ENCODE measurements at regions of chr10 and their contacts with region 1.

Region 1: DNA sequence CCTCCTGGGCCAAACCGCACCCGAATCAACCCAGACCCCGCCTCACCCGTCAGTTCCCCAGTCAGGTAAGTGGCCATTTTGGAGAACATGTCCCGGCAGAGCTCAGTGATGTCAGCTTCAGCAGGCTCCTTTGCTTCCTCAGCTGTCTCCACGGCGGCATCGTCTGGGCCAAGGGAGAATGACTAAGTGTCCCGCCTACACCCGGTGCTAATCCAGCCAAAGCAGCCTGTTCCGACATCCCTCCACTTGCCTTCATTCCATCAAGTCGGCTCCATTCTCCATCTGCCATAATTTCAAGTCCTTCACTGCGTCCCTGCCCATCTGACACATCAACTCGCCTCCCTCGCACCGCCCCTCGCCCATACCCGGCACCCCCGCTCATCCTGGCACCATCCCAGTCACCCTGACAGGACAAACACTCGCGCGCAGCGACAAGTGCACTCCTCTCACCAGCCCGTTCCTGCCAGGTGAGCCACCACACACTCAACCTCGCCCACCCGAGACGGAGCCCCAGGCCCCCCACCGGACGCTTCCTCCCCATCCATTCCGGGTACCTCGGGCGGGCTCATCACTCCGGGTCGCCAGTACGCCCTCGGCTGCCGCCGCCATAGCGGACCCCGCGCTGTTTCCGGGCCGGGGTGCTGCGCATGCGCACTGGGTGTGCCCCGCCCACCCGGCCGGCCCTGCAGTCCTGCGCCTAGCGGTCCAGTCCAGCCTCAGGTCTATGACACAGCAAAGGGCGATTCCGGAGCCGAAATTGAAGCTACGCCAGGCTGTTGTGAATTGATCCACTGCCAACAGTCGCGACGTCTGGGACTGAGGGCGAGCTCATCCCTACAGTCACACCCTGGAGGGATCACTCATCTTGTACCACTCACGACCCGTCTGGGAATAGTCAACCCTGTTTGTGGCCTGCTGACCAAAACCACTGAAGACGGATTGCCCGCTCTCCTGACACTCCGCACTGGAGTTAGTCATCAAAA is at the start of gene BLOC1S2:
- DNase-seq: peak; percentile 98
- H3K4me3 Mint-ChIP-seq: peak within 1 kb of the TSS; percentile 97
- H3K27ac Mint-ChIP-seq: peak within 1 kb of the TSS; percentile 98
- H3K4me1 Mint-ChIP-seq: peaks cover 18% of the 10 kb centered on the region
- H3K27me3 Mint-ChIP-seq: peaks cover under 1% of the 10 kb centered on the region
- total RNA-seq, gene BLOC1S2: 62.0 and 62.5 TPM in 2 replicates

Region 2: DNA sequence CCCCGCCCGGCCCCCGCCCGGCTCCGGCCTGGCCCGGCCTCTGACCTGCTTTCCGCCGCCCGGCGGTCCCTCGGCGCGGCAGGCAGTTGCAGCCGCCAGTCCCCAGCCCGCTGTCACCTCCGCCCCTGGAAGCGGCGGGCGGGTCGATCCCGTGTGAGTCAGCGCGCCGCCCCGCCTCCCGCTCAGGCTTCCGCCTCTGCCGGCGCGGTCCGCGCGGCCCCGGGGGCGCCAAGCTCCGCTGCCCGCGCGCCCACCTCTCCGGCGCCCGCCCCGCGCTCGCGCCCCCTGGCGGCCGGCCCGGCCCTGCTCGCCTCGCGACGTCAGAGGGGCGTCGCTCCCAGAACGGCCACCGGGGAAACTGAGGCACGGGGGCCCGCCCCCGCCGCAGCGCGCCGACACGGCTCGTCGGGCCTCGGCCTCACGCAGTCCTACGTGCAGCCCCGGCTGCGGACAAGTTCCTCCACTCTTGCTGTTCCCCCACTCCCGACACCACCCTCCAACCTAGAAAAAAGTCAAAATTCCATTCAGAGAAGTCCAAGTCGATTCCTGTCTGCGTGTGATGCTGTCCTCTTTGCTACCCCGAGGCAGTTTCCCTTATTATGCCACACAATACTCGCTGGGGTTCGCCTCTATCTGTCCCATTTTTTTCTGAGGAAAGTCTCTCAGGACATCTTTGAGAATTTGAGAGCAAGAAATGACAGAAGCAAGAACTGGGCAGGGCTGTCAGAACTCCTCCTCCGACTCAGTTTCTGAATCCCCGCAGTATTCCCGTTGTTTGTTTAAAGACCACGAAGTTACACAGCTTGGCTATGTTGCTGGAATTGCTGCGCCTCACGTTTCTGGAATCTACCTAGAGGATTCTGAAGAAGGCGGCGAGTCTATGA is 276.3 kb before region 1 on chr10 and contains the start of gene DNMBP:
- intact Hi-C with region 1: loop called (anchors 1 kb)
- DNase-seq: peak; percentile 95
- H3K4me3 Mint-ChIP-seq: peak within 1 kb of the TSS; percentile 89
- H3K27ac Mint-ChIP-seq: peak within 1 kb of the TSS; percentile 78
- H3K4me1 Mint-ChIP-seq: peaks cover 37% of the 10 kb centered on the region
- H3K27me3 Mint-ChIP-seq: peaks cover 31% of the 10 kb centered on the region
- total RNA-seq, gene DNMBP: 1.3 TPM in 2 replicates

Region 3: GRCh38 chr10:100267237-100268104 is 18.9 kb before region 1 on chr10 and contains the start of gene CWF19L1:
- intact Hi-C with region 1: loop called (anchors 2 kb)
- DNase-seq: peak; percentile 94
- H3K4me3 Mint-ChIP-seq: peak within 1 kb of the TSS; percentile 99
- H3K27ac Mint-ChIP-seq: peak within 1 kb of the TSS; percentile 98
- H3K4me1 Mint-ChIP-seq: peaks cover 15% of the 10 kb centered on the region
- H3K27me3 Mint-ChIP-seq: no peaks in the 10 kb centered on the region
- total RNA-seq, gene CWF19L1: 45.2 and 47.2 TPM in 2 replicates

Region 4: DNA sequence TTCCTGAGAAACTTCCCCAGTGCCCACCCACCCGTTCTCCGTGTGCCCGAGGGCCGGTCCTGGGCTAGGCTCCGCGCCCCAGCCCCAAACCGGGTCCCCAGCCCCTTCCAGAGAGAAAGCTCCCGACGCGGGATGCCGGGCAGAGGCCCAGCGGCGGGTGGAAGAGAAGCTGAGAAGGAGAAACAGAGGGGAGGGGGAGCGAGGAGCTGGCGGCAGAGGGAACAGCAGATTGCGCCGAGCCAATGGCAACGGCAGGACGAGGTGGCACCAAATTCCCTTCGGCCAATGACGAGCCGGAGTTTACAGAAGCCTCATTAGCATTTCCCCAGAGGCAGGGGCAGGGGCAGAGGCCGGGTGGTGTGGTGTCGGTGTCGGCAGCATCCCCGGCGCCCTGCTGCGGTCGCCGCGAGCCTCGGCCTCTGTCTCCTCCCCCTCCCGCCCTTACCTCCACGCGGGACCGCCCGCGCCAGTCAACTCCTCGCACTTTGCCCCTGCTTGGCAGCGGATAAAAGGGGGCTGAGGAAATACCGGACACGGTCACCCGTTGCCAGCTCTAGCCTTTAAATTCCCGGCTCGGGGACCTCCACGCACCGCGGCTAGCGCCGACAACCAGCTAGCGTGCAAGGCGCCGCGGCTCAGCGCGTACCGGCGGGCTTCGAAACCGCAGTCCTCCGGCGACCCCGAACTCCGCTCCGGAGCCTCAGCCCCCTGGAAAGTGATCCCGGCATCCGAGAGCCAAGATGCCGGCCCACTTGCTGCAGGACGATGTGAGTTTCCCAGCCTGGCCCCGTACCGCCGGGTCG is 60.6 kb after region 1 on chr10 and contains the start of gene SCD:
- intact Hi-C with region 1: loop called (anchors 1 kb)
- DNase-seq: peak; percentile 97
- H3K4me3 Mint-ChIP-seq: peak within 1 kb of the TSS; percentile 97
- H3K27ac Mint-ChIP-seq: peak within 1 kb of the TSS; percentile 94
- H3K4me1 Mint-ChIP-seq: peaks cover 58% of the 10 kb centered on the region
- H3K27me3 Mint-ChIP-seq: no peaks in the 10 kb centered on the region
- total RNA-seq, gene SCD: 252 and 256 TPM in 2 replicates

Region 5: GRCh38 chr10:100529475-100530298 is 243.3 kb after region 1 on chr10 and contains the start of gene NDUFB8:
- intact Hi-C with region 1: loop called (anchors 2 kb)
- DNase-seq: peak; percentile 97
- H3K4me3 Mint-ChIP-seq: peak within 1 kb of the TSS; percentile 87
- H3K27ac Mint-ChIP-seq: peak within 1 kb of the TSS; percentile 91
- H3K4me1 Mint-ChIP-seq: peaks cover 28% of the 10 kb centered on the region
- H3K27me3 Mint-ChIP-seq: no peaks in the 10 kb centered on the region
- total RNA-seq, gene NDUFB8: 323 TPM in 2 replicates